ENCODE measurements at regions of chr3 and their contacts with region 1.

Region 1: DNA sequence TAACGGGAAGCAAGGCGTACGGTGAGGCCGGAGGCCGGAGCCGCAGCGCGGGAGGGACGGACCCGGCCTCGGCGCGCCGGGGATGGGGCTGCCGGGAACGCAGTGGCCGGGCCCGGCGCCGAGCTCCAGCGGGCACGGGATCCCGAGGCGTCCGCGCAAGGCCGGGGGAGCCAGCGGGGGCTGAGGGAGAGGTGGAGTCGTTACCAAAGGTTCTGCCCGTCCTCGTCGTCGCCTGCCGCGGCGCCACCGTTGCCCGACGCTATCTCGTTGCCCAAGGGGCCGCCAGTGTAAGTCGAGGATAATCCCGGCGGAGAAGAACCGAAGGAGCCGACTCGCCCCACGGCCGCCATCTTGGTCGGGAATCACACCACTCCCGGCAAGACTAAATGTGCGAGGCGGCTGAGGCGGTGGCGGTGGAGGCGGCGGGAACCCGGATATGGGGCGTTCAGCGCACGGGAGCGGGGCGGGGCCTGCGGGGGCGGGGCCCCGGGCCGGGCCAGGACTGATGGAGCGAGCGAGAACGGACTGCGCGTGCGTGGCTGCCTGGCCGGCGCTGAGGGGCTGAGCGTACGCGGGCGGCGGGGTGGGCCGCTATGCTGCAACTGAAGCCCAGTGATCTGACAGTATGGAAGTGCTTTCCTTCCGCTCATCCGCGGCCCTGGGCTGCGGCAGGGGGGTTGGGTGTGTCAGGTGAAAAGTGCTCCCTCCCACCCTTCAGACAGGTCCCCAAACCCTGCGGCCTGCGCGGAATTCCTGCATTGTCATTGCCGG is at the start of gene DYNC1LI1:
- DNase-seq: peak; percentile 90
- H3K4me3 Mint-ChIP-seq: peak within 1 kb of the TSS; percentile 88
- H3K27ac Mint-ChIP-seq: peak within 1 kb of the TSS; percentile 91
- H3K4me1 Mint-ChIP-seq: peaks cover 20% of the 10 kb centered on the region
- H3K27me3 Mint-ChIP-seq: no peaks in the 10 kb centered on the region
- total RNA-seq, gene DYNC1LI1: 38.2 and 40.6 TPM in 2 replicates

Region 2: GRCh38 chr3:32438596-32439344 is 131.8 kb before region 1 on chr3:
- intact Hi-C with region 1: loop called (anchors 10 kb)
- DNase-seq: no peak
- H3K4me3 Mint-ChIP-seq: no peak overlapping the region
- H3K27ac Mint-ChIP-seq: peak overlapping the region; percentile 88
- H3K4me1 Mint-ChIP-seq: peaks cover 55% of the 10 kb centered on the region
- H3K27me3 Mint-ChIP-seq: no peaks in the 10 kb centered on the region

Region 3: GRCh38 chr3:32502118-32502945 is 68.3 kb before region 1 on chr3 and contains the start of gene CMTM6:
- intact Hi-C with region 1: loop called (anchors 1 kb)
- DNase-seq: peak; percentile 68
- H3K4me3 Mint-ChIP-seq: peak within 1 kb of the TSS; percentile 94
- H3K27ac Mint-ChIP-seq: peak within 1 kb of the TSS; percentile 85
- H3K4me1 Mint-ChIP-seq: peaks cover 31% of the 10 kb centered on the region
- H3K27me3 Mint-ChIP-seq: peaks cover 4% of the 10 kb centered on the region
- total RNA-seq, gene CMTM6: 107 and 108 TPM in 2 replicates

Region 4: GRCh38 chr3:32531010-32531647 is 39.5 kb before region 1 on chr3:
- intact Hi-C with region 1: loop called (anchors 5 kb)
- DNase-seq: no peak
- H3K4me3 Mint-ChIP-seq: no peak overlapping the region
- H3K27ac Mint-ChIP-seq: peak overlapping the region; percentile 48
- H3K4me1 Mint-ChIP-seq: peaks cover 9% of the 10 kb centered on the region
- H3K27me3 Mint-ChIP-seq: no peaks in the 10 kb centered on the region

Region 5: DNA sequence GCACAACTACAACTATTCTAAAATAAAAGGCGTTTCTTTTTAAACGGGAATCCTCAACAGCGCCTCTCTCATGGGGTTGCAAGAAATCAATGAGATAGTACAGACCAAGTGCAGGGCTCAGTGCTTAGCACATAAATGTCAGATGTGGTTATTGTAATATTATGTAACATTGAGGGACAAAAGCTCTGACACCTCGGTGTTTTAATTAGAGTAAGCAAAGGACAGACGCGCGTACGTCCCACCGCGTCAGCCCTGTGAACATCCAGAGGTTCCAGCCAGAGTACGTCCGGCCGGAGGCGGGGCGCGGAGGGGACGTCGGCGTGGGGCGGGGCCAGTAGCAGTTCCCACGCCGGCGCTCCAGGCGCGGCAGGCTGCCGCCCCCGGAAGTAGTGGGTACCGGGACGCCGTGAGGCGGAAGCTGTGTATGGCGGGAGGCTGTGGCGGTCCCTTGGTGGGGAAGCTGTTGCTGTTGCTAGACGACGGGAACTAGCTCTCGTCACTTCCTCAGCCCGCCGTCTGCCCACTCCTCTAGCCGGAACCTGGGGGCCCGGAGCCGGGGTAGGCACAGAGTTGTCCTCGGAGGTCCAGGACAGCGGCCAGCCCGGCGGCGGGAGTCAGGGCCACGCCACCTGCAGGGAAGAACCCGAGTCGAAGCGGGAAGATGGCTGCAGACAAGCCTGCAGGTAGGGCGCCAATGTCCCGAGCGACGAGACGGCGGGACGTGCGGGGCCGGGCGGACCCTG is 114.4 kb after region 1 on chr3 and contains the start of gene CNOT10:
- intact Hi-C with region 1: loop called (anchors 1 kb)
- DNase-seq: peak; percentile 97
- H3K4me3 Mint-ChIP-seq: peak within 1 kb of the TSS; percentile 87
- H3K27ac Mint-ChIP-seq: peak within 1 kb of the TSS; percentile 90
- H3K4me1 Mint-ChIP-seq: peaks cover 27% of the 10 kb centered on the region
- H3K27me3 Mint-ChIP-seq: peaks cover 3% of the 10 kb centered on the region
- total RNA-seq, gene CNOT10: 51.5 and 53.5 TPM in 2 replicates

Measured in activated T-helper 2 cell treated with anti-CD3 and anti-CD28 coated beads, Interferon-gamma antibody, Interleukin-2, Interleukin-4, amounts not matched to agents 10 μg/mL and 5 μg/mL and 100 μg/mL, durations not matched to agents 14 hours and 24 hours and 36 hours (primary cell).